ENCODE measurements at regions of chr1 and their contacts with region 1.

Region 1: DNA sequence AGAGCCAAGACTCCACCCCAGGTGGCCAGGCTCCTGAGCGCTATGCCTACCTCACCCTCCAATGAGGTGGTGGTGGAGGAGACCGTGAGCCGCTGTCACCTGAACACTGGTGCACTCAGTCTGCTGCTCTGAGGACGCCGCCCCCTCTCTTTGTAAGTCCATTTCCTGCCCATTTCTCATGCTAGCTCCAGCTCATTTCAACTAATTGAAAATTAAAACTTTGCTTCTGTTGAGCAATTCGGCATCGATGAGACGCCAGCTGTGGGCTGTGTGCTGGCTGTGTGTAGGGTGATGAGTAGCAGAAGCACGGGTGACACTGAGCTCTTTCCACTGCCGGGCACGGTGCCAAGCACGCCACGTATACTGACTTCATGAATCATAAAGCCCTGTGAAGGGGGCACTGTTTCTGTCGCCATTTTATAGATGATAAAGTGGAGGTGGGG is 11.2 kb downstream of the TNFRSF1B start:
- DNase-seq: peak; percentile 86 to 99 (median 90)
- H3K4me3 ChIP-seq: peak overlapping the region; percentile 8 to 32
- H3K4me3 Mint-ChIP-seq: peak overlapping the region; percentile 80 to 94 (median 88)
- H3K27ac ChIP-seq: peak overlapping the region; percentile 97
- H3K27ac Mint-ChIP-seq: peak overlapping the region; percentile 98 to 100 (median 99)
- H3K4me1 ChIP-seq: peaks cover 100% of the 10 kb centered on the region
- H3K4me1 Mint-ChIP-seq: peaks cover 45 to 98% (median 83%) of the 10 kb centered on the region in 4 donors
- H3K27me3 ChIP-seq: no peaks in the 10 kb centered on the region
- H3K27me3 Mint-ChIP-seq: peaks cover 0 to 3% of the 10 kb centered on the region in 2 donors

Region 2: DNA sequence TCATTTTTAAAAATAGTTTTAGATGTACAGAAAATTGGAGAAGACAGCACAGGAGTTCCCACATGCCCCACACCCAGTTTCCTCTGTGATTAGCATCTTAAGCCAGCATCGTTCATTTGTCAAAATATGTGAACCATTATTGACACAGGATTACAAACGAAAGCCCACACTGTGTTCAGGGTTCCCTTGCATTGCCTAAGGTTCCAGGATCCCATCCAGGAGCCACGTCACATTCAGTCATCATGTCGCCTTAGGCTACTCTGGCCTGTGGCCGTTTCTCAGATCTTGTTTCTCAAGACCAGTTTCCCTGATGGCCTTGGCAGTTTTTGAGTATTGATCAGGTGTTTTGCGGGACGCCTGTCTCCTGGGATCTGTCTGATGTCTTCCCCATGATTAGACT is 45.9 kb before region 1 on chr1:
- CTCF ChIA-PET with region 1: interaction called, 213 read pairs
- POLR2A ChIA-PET with region 1: interaction called, 1,713 read pairs
- intact Hi-C with region 1: loop called (anchors 2 kb)
- DNase-seq: no peak
- H3K4me3 ChIP-seq: peak overlapping the region; percentile 6 to 49
- H3K4me3 Mint-ChIP-seq: peak overlapping the region in 7 of 8 donors; percentile 17 to 87 (median 79)
- H3K27ac ChIP-seq: peak overlapping the region; percentile 45
- H3K27ac Mint-ChIP-seq: peak overlapping the region; percentile 95 to 98 (median 97)
- H3K4me1 ChIP-seq: peaks cover 59% of the 10 kb centered on the region
- H3K4me1 Mint-ChIP-seq: peaks cover 28 to 63% (median 41%) of the 10 kb centered on the region in 4 donors
- H3K27me3 ChIP-seq: no peaks in the 10 kb centered on the region
- H3K27me3 Mint-ChIP-seq: no peaks in the 10 kb centered on the region

Region 3: GRCh38 chr1:12153181-12153785 is 24.7 kb before region 1 on chr1:
- CTCF ChIA-PET with region 1: interaction called, 23 read pairs
- POLR2A ChIA-PET with region 1: interaction called, 1,713 read pairs
- intact Hi-C with region 1: loop called (anchors 2 kb)
- DNase-seq: peak in 1 of 5 donors; percentile 73
- H3K4me3 ChIP-seq: peak overlapping the region in 1 of 2 donors; percentile 17
- H3K4me3 Mint-ChIP-seq: peak overlapping the region in 7 of 8 donors; percentile 30 to 78 (median 63)
- H3K27ac ChIP-seq: peak overlapping the region; percentile 51
- H3K27ac Mint-ChIP-seq: peak overlapping the region; percentile 92 to 99 (median 97)
- H3K4me1 ChIP-seq: peaks cover 96% of the 10 kb centered on the region
- H3K4me1 Mint-ChIP-seq: peaks cover 71 to 92% (median 84%) of the 10 kb centered on the region in 4 donors
- H3K27me3 ChIP-seq: no peaks in the 10 kb centered on the region
- H3K27me3 Mint-ChIP-seq: no peaks in the 10 kb centered on the region

Region 4: DNA sequence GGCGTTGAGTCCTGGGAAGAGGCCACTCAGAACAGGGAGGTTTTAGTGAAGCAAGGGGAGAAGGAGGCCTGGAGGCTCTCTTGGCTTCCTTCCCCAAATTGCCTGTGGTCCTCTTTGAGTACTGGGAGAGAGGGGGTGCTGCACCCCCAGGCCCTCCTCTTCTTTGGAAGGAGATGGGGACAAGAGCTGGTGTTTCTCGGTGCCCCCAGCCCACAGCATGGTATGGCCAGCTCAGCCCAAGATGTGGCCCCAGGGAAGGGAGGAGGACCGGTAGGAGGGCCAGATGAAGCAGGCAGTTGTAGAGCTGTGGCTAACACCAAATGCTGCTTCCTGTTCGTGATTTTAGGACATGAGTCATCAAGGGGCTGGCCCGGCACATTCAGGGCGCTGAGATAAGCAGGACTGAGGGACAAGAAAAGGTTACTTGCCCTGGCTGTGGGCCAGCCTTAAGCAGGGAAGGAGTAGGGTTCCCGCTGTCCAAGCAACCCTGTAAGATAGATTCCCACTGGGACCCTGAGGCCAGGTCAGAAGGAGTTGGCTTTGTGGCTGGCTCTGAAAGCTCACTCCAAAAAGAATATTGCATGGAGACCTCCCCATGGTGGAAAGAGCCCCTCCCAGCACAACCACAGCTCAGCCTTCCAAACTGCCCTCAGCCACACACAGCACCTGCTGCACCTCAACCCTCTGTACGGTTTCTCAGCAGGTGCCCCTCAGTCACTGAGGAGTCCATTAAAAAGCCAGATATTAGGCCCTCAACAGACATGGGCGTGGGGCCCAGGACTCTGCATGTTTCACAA is 16.2 kb before region 1 on chr1:
- CTCF ChIA-PET with region 1: interaction called, 10 read pairs
- POLR2A ChIA-PET with region 1: interaction called, 1,713 read pairs
- intact Hi-C with region 1: loop called (anchors 1 kb)
- DNase-seq: peak; percentile 70 to 93 (median 71)
- H3K4me3 ChIP-seq: peak overlapping the region in 1 of 2 donors; percentile 38
- H3K4me3 Mint-ChIP-seq: peak overlapping the region; percentile 24 to 90 (median 76)
- H3K27ac ChIP-seq: peak overlapping the region; percentile 65
- H3K27ac Mint-ChIP-seq: peak overlapping the region; percentile 91 to 100 (median 96)
- H3K4me1 ChIP-seq: peaks cover 92% of the 10 kb centered on the region
- H3K4me1 Mint-ChIP-seq: peaks cover 53 to 87% (median 71%) of the 10 kb centered on the region in 4 donors
- H3K27me3 ChIP-seq: no peaks in the 10 kb centered on the region
- H3K27me3 Mint-ChIP-seq: no peaks in the 10 kb centered on the region

Region 5: DNA sequence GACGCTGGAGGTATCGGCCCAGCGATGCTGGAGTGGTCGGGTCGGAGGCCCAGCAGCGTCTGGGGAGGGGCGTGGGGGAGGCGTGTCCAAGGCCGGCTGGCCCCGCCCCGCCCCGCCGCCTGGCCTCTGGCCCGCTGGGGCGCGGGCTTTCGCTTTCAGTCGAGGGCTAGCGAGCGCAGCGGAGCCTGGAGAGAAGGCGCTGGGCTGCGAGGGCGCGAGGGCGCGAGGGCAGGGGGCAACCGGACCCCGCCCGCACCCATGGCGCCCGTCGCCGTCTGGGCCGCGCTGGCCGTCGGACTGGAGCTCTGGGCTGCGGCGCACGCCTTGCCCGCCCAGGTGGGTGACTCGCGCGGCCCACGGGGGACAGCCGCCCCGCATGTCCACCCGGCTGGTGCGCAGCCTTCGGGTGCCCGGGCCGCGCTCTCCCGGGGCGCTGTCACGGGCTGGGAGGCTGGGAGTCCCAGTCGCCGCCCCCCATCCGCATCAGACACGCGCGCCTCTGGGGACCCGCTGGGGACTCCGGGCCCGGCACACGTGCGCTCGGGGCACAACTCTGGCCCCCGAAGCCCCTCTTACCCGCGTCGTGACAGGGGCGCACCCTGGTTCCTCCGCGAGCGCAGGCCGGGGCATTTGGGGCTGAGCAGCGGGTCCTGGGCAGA is 11.1 kb before region 1 on chr1 and contains the start of gene TNFRSF1B:
- CTCF ChIA-PET with region 1: interaction called, 25 read pairs
- POLR2A ChIA-PET with region 1: interaction called, 109 read pairs
- intact Hi-C with region 1: loop called (anchors 1 kb)
- DNase-seq: peak; percentile 57 to 75 (median 63)
- H3K4me3 ChIP-seq: peak within 1 kb of the TSS; percentile 85 to 93
- H3K4me3 Mint-ChIP-seq: peak within 1 kb of the TSS; percentile 100
- H3K27ac ChIP-seq: peak within 1 kb of the TSS; percentile 88
- H3K27ac Mint-ChIP-seq: peak within 1 kb of the TSS; percentile 99 to 100 (median 99)
- H3K4me1 ChIP-seq: peaks cover 85% of the 10 kb centered on the region
- H3K4me1 Mint-ChIP-seq: peaks cover 43 to 81% (median 65%) of the 10 kb centered on the region in 4 donors
- H3K27me3 ChIP-seq: no peaks in the 10 kb centered on the region
- H3K27me3 Mint-ChIP-seq: no peaks in the 10 kb centered on the region
- total RNA-seq, gene TNFRSF1B: 111 TPM

Region 6: DNA sequence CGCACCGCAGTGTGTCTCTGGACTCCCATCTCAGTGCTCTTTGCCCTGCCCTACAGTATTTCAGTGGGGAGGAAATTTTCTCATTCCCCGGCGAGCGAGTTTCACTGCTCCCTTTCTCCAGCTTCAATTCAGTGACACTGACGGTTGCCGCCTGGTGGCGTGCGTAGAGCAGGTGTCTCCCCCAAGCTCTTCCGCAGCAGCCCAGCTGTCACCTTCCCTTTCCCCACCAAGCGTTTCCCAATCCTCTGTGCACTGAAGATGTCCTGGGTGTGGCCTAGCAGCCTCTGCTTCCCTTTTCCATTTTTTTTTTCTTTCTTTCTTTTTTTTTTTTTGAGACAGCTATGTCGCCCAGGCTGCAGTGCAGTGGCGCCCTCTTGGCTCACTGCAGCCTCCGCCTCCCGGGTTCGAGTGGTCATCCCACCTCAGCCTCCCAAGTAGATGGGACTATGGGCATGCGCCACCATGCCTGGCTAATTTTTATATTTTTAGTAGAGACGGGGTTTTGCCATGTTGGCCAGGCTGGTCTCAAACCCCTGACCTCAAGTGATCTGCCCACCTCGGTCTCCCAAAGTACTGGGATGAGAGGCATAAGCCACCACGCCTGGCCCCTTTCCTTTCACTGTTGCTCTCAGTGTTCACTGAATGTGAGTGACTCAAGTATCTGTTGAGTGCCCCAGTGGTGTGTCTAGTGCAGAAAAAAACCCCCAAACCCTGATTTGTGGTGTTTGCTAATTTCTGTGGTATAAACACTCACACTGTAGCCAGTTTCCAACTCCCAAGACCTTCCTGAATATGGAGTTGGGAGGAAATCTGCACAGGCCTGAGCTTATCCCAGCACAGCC is 18.8 kb after region 1 on chr1:
- CTCF ChIA-PET with region 1: interaction called, 8 read pairs
- POLR2A ChIA-PET with region 1: interaction called, 12 read pairs
- intact Hi-C with region 1: no loop called
- DNase-seq: no peak
- H3K4me3 ChIP-seq: no peak overlapping the region
- H3K4me3 Mint-ChIP-seq: no peak overlapping the region
- H3K27ac ChIP-seq: no peak overlapping the region
- H3K27ac Mint-ChIP-seq: peak overlapping the region in 5 of 7 donors; percentile 6 to 81 (median 50)
- H3K4me1 ChIP-seq: peaks cover 23% of the 10 kb centered on the region
- H3K4me1 Mint-ChIP-seq: peaks cover 11 to 26% (median 14%) of the 10 kb centered on the region in 4 donors
- H3K27me3 ChIP-seq: no peaks in the 10 kb centered on the region
- H3K27me3 Mint-ChIP-seq: no peaks in the 10 kb centered on the region

Region 7: DNA sequence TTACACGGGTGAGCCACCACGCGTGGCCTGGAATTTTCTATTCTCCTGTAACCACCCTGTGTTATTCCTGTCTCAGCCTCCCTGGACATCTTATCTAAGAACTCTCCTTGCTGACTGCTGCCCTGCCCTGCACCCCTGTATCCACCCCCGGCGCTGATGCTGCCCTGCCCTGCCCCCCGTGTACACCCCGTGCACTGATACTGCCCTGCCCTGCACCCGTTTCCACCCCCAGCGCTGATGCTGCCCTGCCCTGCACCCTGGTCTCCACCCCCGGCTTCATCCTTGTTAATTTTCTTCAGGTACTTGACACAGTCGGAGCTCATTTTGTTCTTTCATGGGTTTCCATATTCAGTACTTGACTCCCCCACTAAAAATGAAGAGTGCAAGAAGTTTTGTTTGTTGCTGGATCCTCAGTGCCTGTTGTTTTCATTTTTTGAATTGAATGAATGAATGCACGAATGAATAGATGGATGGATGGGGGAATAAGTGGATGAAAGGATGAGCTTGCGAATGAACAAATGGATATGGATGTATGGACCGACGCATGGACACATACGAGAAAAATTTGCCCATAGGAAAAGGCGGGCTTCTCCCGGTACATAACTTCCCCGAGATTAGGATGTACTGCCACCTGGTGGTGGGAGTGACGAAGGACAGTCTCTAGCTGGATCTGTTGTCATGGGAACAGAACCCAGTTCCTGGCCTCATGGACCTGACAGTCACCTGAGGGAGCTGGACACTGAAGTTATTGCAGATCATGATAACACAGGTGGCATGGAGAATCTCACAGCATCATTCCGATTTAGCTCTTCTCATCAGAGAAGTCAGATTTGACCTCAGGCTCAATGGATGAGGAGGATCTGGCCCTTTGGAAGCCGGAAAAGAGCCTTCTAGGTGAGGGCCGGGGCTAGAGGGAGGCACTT is 480.8 kb after region 1 on chr1:
- CTCF ChIA-PET with region 1: no interaction called
- POLR2A ChIA-PET with region 1: no interaction called
- intact Hi-C with region 1: no loop called
- DNase-seq: peak; percentile 57 to 65 (median 57)
- H3K4me3 ChIP-seq: no peak overlapping the region
- H3K4me3 Mint-ChIP-seq: peak overlapping the region in 2 of 8 donors; percentile 3 to 29
- H3K27ac ChIP-seq: no peak overlapping the region
- H3K27ac Mint-ChIP-seq: no peak overlapping the region
- H3K4me1 ChIP-seq: peaks cover 4% of the 10 kb centered on the region
- H3K4me1 Mint-ChIP-seq: peaks cover 4 to 8% (median 6%) of the 10 kb centered on the region in 4 donors
- H3K27me3 ChIP-seq: no peaks in the 10 kb centered on the region
- H3K27me3 Mint-ChIP-seq: peaks cover 3 to 6% of the 10 kb centered on the region in 2 donors

Measured in CD4-positive, alpha-beta memory T cell (primary cell).